CD8-positive, alpha-beta memory T cell (primary cell): ENCODE measurements at regions of chr14 and their contacts with region 1.

Region 1: GRCh38 chr14:22570132-22570949 is 18.7 kb downstream of the DAD1 start:
- DNase-seq: peak; percentile 70 to 97 (median 93)
- H3K4me3 ChIP-seq: peak overlapping the region; percentile 40
- H3K4me3 Mint-ChIP-seq: peak overlapping the region; percentile 55 to 88 (median 83)
- H3K27ac ChIP-seq: peak overlapping the region; percentile 55
- H3K27ac Mint-ChIP-seq: peak overlapping the region; percentile 89 to 99 (median 98)
- H3K4me1 ChIP-seq: peaks cover 49% of the 10 kb centered on the region
- H3K4me1 Mint-ChIP-seq: peaks cover 52 to 59% (median 59%) of the 10 kb centered on the region in 3 donors
- H3K27me3 ChIP-seq: no peaks in the 10 kb centered on the region
- H3K27me3 Mint-ChIP-seq: no peaks in the 10 kb centered on the region

Region 2: GRCh38 chr14:21647380-21647779 is 923.0 kb before region 1 on chr14:
- CTCF ChIA-PET with region 1: interaction called, 12 read pairs
- POLR2A ChIA-PET with region 1: no interaction called
- DNase-seq: no peak
- H3K4me3 ChIP-seq: no peak overlapping the region
- H3K4me3 Mint-ChIP-seq: no peak overlapping the region
- H3K27ac ChIP-seq: no peak overlapping the region
- H3K27ac Mint-ChIP-seq: peak overlapping the region in 1 of 8 donors; percentile 33
- H3K4me1 ChIP-seq: no peaks in the 10 kb centered on the region
- H3K4me1 Mint-ChIP-seq: no peaks in the 10 kb centered on the region
- H3K27me3 ChIP-seq: peaks cover 3% of the 10 kb centered on the region
- H3K27me3 Mint-ChIP-seq: peaks cover 6 to 33% of the 10 kb centered on the region in 2 donors

Region 3: GRCh38 chr14:22519877-22520685 is 50.3 kb before region 1 on chr14:
- CTCF ChIA-PET with region 1: interaction called, 14 read pairs
- POLR2A ChIA-PET with region 1: interaction called, 9 read pairs
- DNase-seq: peak in 1 of 5 donors; percentile 43
- H3K4me3 ChIP-seq: peak overlapping the region; percentile 69
- H3K4me3 Mint-ChIP-seq: peak overlapping the region; percentile 88 to 95 (median 90)
- H3K27ac ChIP-seq: peak overlapping the region; percentile 38
- H3K27ac Mint-ChIP-seq: peak overlapping the region; percentile 90 to 98 (median 96)
- H3K4me1 ChIP-seq: peaks cover 100% of the 10 kb centered on the region
- H3K4me1 Mint-ChIP-seq: peaks cover 90 to 100% (median 98%) of the 10 kb centered on the region in 3 donors
- H3K27me3 ChIP-seq: no peaks in the 10 kb centered on the region
- H3K27me3 Mint-ChIP-seq: no peaks in the 10 kb centered on the region

Region 4: GRCh38 chr14:22542360-22542759 is 28.0 kb before region 1 on chr14:
- CTCF ChIA-PET with region 1: interaction called, 338 read pairs
- POLR2A ChIA-PET with region 1: interaction called, 4 read pairs
- DNase-seq: no peak
- H3K4me3 ChIP-seq: peak overlapping the region; percentile 60
- H3K4me3 Mint-ChIP-seq: peak overlapping the region; percentile 81 to 93 (median 85)
- H3K27ac ChIP-seq: peak overlapping the region; percentile 10
- H3K27ac Mint-ChIP-seq: peak overlapping the region; percentile 88 to 100 (median 98)
- H3K4me1 ChIP-seq: peaks cover 99% of the 10 kb centered on the region
- H3K4me1 Mint-ChIP-seq: peaks cover 97 to 100% (median 100%) of the 10 kb centered on the region in 3 donors
- H3K27me3 ChIP-seq: no peaks in the 10 kb centered on the region
- H3K27me3 Mint-ChIP-seq: no peaks in the 10 kb centered on the region

Region 5: DNA sequence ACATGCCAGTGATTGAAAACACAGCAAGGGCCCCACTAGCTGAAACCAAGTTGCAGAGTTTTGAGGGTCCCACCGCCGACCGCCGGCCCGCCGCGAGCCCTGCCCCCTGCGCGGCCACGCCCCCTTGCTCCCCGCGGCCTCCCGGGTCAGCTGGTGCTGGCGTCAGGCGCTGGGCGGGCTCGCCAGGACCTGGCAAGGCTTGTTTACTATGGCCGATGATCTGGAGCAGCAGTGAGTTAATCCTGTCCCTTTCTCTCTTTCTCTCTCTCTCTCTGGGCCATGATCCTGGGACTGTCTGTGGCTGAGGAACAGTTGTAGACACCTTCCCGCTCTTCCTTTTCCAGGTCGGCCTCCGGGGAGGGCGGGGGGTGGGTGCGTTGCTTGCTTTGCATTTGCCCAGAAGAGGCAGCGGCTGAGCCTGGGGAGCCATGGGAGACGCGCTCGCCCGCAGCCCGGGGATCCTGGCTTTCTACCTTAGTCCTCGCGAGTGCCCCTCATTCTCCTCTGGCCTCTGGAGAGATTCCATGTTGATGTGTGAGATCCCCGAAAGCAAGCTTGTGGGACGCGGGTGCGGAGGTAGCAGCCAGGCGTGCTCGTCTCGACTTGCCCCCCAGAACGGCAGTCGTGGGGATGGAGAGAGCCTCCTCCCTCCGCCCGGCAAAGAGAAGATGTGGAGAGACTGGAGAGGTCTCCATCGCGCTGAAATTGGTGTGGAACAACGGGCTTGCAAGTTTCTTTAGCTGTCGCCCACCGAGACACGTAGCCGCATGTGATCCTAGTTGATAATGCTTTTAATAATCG is 28.0 kb after region 1 on chr14 and contains the start of gene ABHD4:
- CTCF ChIA-PET with region 1: interaction called, 37 read pairs
- POLR2A ChIA-PET with region 1: interaction called, 5 read pairs
- DNase-seq: peak; percentile 59 to 74 (median 63)
- H3K4me3 ChIP-seq: peak within 1 kb of the TSS; percentile 90
- H3K4me3 Mint-ChIP-seq: peak within 1 kb of the TSS; percentile 93 to 98 (median 96)
- H3K27ac ChIP-seq: peak within 1 kb of the TSS; percentile 74
- H3K27ac Mint-ChIP-seq: peak within 1 kb of the TSS; percentile 69 to 97 (median 94)
- H3K4me1 ChIP-seq: peaks cover 10% of the 10 kb centered on the region
- H3K4me1 Mint-ChIP-seq: peaks cover 26 to 43% (median 36%) of the 10 kb centered on the region in 3 donors
- H3K27me3 ChIP-seq: no peaks in the 10 kb centered on the region
- H3K27me3 Mint-ChIP-seq: peaks cover 0 to 3% of the 10 kb centered on the region in 2 donors
- total RNA-seq, gene ABHD4: 8.4 to 11.4 TPM

Region 6: DNA sequence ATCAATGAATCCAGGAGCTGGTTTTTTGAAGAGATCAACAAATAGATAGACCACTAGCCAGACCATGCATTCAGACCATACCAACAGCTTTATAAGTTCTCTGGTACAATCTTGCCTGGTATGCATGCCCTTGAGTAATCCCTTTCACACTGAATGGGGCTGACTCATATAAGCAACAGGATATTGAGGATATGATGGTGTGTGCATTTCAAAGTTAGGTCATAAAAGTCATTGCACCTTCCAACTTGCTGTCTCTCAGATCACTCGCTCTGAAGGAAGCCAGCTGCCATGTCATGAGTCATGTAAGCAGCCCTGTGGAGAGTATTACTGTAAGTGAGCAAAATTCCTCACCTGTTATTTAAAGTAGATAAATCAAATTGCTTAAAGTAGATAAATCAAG is 118.8 kb after region 1 on chr14:
- CTCF ChIA-PET with region 1: no interaction called
- POLR2A ChIA-PET with region 1: no interaction called
- DNase-seq: no peak
- H3K4me3 ChIP-seq: no peak overlapping the region
- H3K4me3 Mint-ChIP-seq: no peak overlapping the region
- H3K27ac ChIP-seq: no peak overlapping the region
- H3K27ac Mint-ChIP-seq: peak overlapping the region in 1 of 8 donors; percentile 26
- H3K4me1 ChIP-seq: no peaks in the 10 kb centered on the region
- H3K4me1 Mint-ChIP-seq: no peaks in the 10 kb centered on the region
- H3K27me3 ChIP-seq: no peaks in the 10 kb centered on the region
- H3K27me3 Mint-ChIP-seq: peaks cover 36 to 71% of the 10 kb centered on the region in 2 donors

Region 7: GRCh38 chr14:22737052-22737451 is 166.7 kb after region 1 on chr14:
- CTCF ChIA-PET with region 1: no interaction called
- POLR2A ChIA-PET with region 1: no interaction called
- DNase-seq: no peak
- H3K4me3 ChIP-seq: no peak overlapping the region
- H3K4me3 Mint-ChIP-seq: no peak overlapping the region
- H3K27ac ChIP-seq: no peak overlapping the region
- H3K27ac Mint-ChIP-seq: no peak overlapping the region
- H3K4me1 ChIP-seq: no peaks in the 10 kb centered on the region
- H3K4me1 Mint-ChIP-seq: no peaks in the 10 kb centered on the region
- H3K27me3 ChIP-seq: no peaks in the 10 kb centered on the region
- H3K27me3 Mint-ChIP-seq: peaks cover 2 to 18% of the 10 kb centered on the region in 2 donors

Region 8: DNA sequence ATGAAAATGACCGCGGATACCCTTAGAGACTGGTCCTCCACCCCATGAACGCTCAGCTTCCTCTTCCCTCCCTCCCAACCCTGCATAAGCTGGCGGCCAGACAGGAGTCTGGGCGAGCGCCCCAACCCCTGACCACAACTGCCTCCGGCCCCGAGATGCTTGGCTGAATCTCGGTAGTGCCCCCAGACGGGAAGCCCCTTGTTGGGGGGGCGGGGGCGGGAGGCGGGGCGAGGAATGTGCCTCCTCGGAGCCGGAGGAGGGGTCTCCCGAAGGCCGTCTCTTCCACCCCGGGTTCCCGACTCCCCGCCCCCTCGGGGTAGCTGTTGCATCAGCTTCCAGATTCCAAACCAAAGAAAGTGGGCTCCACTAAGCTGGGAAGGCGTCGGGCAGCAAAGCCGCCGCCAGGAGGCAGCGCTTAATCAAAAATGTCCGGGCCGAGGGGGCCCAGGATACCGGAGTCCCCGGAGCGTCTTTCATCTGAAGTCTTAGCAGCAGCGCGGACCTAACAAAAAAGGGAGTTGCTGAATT is 252.3 kb after region 1 on chr14:
- CTCF ChIA-PET with region 1: interaction called, 42 read pairs
- POLR2A ChIA-PET with region 1: interaction called, 5 read pairs
- DNase-seq: peak; percentile 53 to 81 (median 57)
- H3K4me3 ChIP-seq: peak overlapping the region; percentile 13
- H3K4me3 Mint-ChIP-seq: peak overlapping the region in 6 of 7 donors; percentile 41 to 72 (median 66)
- H3K27ac ChIP-seq: no peak overlapping the region
- H3K27ac Mint-ChIP-seq: peak overlapping the region in 1 of 8 donors; percentile 15
- H3K4me1 ChIP-seq: peaks cover 19% of the 10 kb centered on the region
- H3K4me1 Mint-ChIP-seq: peaks cover 8 to 12% (median 9%) of the 10 kb centered on the region in 3 donors
- H3K27me3 ChIP-seq: no peaks in the 10 kb centered on the region
- H3K27me3 Mint-ChIP-seq: peaks cover 35 to 45% of the 10 kb centered on the region in 2 donors

Region 9: DNA sequence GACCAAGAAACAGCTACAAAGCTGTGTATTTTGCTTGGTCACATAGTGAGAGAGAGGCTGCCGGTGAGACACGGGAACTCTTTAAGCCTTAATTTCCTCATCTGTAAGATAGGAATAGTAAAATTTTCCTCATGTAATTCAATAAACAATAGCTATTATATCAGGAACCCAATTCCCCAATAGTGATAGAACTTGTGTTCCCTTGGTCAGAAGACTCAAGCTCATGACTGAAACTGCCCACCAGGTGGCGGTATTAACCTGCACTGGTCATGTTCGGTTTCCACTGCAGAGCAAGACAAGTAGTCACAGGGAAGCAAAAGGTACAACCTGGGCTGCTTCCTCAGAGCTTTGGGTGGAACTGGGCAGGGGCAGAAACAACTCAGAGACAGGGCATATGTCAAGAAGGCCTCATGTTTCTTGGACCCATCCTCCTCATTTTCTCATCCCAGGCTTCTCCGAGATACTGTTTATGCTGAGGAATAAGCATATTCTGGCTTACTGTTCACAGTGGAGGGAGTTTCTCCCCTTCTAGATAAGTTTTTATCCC is 416.2 kb after region 1 on chr14:
- CTCF ChIA-PET with region 1: interaction called, 14 read pairs
- POLR2A ChIA-PET with region 1: no interaction called
- DNase-seq: peak; percentile 75 to 89 (median 79)
- H3K4me3 ChIP-seq: no peak overlapping the region
- H3K4me3 Mint-ChIP-seq: peak overlapping the region in 1 of 7 donors; percentile 60
- H3K27ac ChIP-seq: no peak overlapping the region
- H3K27ac Mint-ChIP-seq: peak overlapping the region in 2 of 8 donors; percentile 12 to 29
- H3K4me1 ChIP-seq: peaks cover 7% of the 10 kb centered on the region
- H3K4me1 Mint-ChIP-seq: no peaks in the 10 kb centered on the region
- H3K27me3 ChIP-seq: no peaks in the 10 kb centered on the region
- H3K27me3 Mint-ChIP-seq: no peaks in the 10 kb centered on the region